Posterior vena cava (tissue), 2 donors: ENCODE measurements at regions of chr2 and their contacts with region 1.

Region 1: GRCh38 chr2:151409601-151410484 is at the start of gene RIF1:
- DNase-seq: peak; percentile 96
- total RNA-seq, gene RIF1: 31.0 to 40.4 TPM

Region 2: GRCh38 chr2:151289369-151290088 is 120.3 kb before region 1 on chr2 and contains the start of gene NMI:
- intact Hi-C with region 1: loop called in 1 of 2 experiments (anchors 10 kb)
- DNase-seq: peak; percentile 95
- total RNA-seq, gene NMI: 11.5 to 12.0 TPM

Region 3: GRCh38 chr2:152036611-152037469 is 627.0 kb after region 1 on chr2:
- intact Hi-C with region 1: no loop called
- DNase-seq: no peak